ENCODE measurements at regions of chr6 and their contacts with region 1.

Region 1: GRCh38 chr6:159042003-159042825 is 2.6 kb downstream of the TAGAP start:
- DNase-seq: peak; percentile 84
- ATAC-seq: peak; percentile 39
- H3K4me3 Mint-ChIP-seq: peak overlapping the region; percentile 87
- H3K27ac Mint-ChIP-seq: peak overlapping the region; percentile 97
- H3K4me1 Mint-ChIP-seq: peaks cover 71% of the 10 kb centered on the region
- H3K27me3 Mint-ChIP-seq: no peaks in the 10 kb centered on the region

Region 2: GRCh38 chr6:158923805-158924498 is 118.3 kb before region 1 on chr6:
- CTCF ChIA-PET with region 1: no interaction called
- POLR2A ChIA-PET with region 1: no interaction called
- intact Hi-C with region 1: no loop called
- DNase-seq: no peak
- ATAC-seq: no peak
- H3K4me3 Mint-ChIP-seq: no peak overlapping the region
- H3K27ac Mint-ChIP-seq: no peak overlapping the region
- H3K4me1 Mint-ChIP-seq: no peaks in the 10 kb centered on the region
- H3K27me3 Mint-ChIP-seq: no peaks in the 10 kb centered on the region

Region 3: GRCh38 chr6:158999666-159000403 is 42.4 kb before region 1 on chr6 and contains the start of gene RSPH3:
- CTCF ChIA-PET with region 1: interaction called, 6 read pairs
- POLR2A ChIA-PET with region 1: interaction called, 8 read pairs
- intact Hi-C with region 1: loop called (anchors 1 to 2 kb)
- DNase-seq: peak; percentile 97
- ATAC-seq: peak; percentile 86
- H3K4me3 Mint-ChIP-seq: peak within 1 kb of the TSS; percentile 82
- H3K27ac Mint-ChIP-seq: peak within 1 kb of the TSS; percentile 66
- H3K4me1 Mint-ChIP-seq: peaks cover 46% of the 10 kb centered on the region
- H3K27me3 Mint-ChIP-seq: no peaks in the 10 kb centered on the region
- total RNA-seq, gene RSPH3: 6.5 to 9.3 TPM

Region 4: GRCh38 chr6:159023893-159024292 is 18.3 kb before region 1 on chr6:
- CTCF ChIA-PET with region 1: interaction called, 31 read pairs
- POLR2A ChIA-PET with region 1: no interaction called
- intact Hi-C with region 1: loop called in 1 of 2 experiments (anchors 1 kb)
- DNase-seq: peak; percentile 67
- ATAC-seq: peak; percentile 97
- H3K4me3 Mint-ChIP-seq: no peak overlapping the region
- H3K27ac Mint-ChIP-seq: peak overlapping the region; percentile 67
- H3K4me1 Mint-ChIP-seq: peaks cover 36% of the 10 kb centered on the region
- H3K27me3 Mint-ChIP-seq: no peaks in the 10 kb centered on the region

Region 5: GRCh38 chr6:159098636-159099106 is 56.5 kb after region 1 on chr6:
- CTCF ChIA-PET with region 1: interaction called, 330 read pairs
- POLR2A ChIA-PET with region 1: interaction called, 18 read pairs
- intact Hi-C with region 1: loop called (anchors 1 kb)
- DNase-seq: peak; percentile 80
- ATAC-seq: peak; percentile 52
- H3K4me3 Mint-ChIP-seq: peak overlapping the region; percentile 54
- H3K27ac Mint-ChIP-seq: peak overlapping the region; percentile 91
- H3K4me1 Mint-ChIP-seq: peaks cover 83% of the 10 kb centered on the region
- H3K27me3 Mint-ChIP-seq: no peaks in the 10 kb centered on the region

Region 6: DNA sequence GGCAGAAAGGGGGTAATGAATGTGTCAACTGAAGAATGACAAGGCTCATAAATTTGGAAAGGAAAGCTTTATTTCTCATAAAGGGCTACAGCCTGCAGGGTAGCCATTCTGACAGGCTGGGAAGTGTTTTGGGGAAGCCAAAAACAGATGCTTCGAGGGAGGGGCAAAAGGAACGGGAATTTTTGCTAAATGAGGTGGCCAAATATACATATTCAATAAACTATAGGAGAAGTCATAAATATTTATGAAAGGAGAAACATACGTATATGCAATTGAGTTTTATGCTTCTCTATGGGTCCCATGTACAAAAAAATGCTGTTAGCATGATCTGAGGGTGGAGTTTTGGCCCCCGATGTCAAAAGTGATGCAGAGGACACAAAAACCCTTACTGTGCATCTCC is 307.7 kb after region 1 on chr6:
- CTCF ChIA-PET with region 1: no interaction called
- POLR2A ChIA-PET with region 1: no interaction called
- intact Hi-C with region 1: no loop called
- DNase-seq: no peak
- ATAC-seq: no peak
- H3K4me3 Mint-ChIP-seq: no peak overlapping the region
- H3K27ac Mint-ChIP-seq: no peak overlapping the region
- H3K4me1 Mint-ChIP-seq: no peaks in the 10 kb centered on the region
- H3K27me3 Mint-ChIP-seq: peaks cover 11% of the 10 kb centered on the region

Region 7: GRCh38 chr6:159693128-159693893 is 651.1 kb after region 1 on chr6 and contains the start of gene SOD2:
- CTCF ChIA-PET with region 1: no interaction called
- POLR2A ChIA-PET with region 1: no interaction called
- intact Hi-C with region 1: loop called in 1 of 2 experiments (anchors 10 kb)
- DNase-seq: peak; percentile 90
- ATAC-seq: peak; percentile 75
- H3K4me3 Mint-ChIP-seq: peak within 1 kb of the TSS; percentile 92
- H3K27ac Mint-ChIP-seq: peak within 1 kb of the TSS; percentile 93
- H3K4me1 Mint-ChIP-seq: peaks cover 44% of the 10 kb centered on the region
- H3K27me3 Mint-ChIP-seq: no peaks in the 10 kb centered on the region
- total RNA-seq, gene SOD2: 90.6 to 105 TPM